H1 (cell line): ENCODE measurements at regions of chr10 and their contacts with region 1.

Region 1: DNA sequence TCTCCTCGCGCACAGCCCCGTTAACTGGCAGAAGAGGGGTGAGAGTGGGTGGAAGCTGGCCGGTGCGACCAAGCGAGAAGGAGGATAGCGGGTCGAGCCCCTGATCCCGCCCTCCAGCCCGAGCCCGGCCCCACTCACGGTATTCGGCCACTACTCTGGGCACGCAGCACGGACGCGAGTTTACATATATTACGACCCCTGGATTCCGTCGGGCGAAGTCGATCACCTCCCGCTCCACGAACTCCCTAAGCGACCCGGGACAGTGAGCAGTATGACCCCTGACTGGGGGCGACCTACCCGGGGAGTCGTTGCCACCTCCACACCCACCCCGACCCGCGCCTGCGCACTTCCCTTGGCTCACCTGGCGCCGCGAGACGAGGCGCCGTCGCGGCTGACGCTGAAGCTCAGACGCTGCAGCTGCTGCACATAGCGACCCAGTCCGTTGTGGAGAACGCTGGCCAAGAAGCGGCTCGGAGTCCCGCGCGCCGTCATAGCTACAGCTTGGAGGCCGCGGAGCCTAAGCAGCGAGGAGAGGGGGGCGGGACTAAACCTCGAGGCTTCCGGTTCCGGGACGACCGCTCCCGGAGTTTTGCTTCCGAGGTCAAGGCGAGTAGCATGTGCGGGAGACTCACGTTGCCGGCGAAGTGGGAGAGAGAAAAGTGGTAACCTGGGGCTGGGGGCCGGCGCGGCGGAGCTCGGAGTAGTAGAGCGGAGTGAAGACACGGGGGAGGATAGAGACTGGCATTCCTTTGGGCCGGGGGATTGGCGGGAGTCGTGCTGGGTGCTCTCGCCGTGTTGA is at the starts of genes MRPL43 and TWNK:
- DNase-seq: peak in 1 of 2 experiments; percentile 92
- H3K4me3 ChIP-seq: peak within 1 kb of the TSS; percentile 68 to 92 (median 80)
- H3K27ac ChIP-seq: peak within 1 kb of the TSS; percentile 37
- H3K4me1 ChIP-seq: peaks cover 0 to 12% (median 5%) of the 10 kb centered on the region in 4 experiments; a peak in 4 of 7 replicates
- H3K27me3 ChIP-seq: no peaks in the 10 kb centered on the region
- CTCF ChIP-seq: no peak
- EP300 ChIP-seq: no peak
- POLR2A ChIP-seq: peak; percentile 36 to 63; a peak in 2 of 3 replicates
- RAD21 ChIP-seq: no peak
- total RNA-seq, gene MRPL43: 74.1 and 80.9 TPM in 2 replicates
- total RNA-seq, gene TWNK: 32.5 and 34.9 TPM in 2 replicates

Region 2: DNA sequence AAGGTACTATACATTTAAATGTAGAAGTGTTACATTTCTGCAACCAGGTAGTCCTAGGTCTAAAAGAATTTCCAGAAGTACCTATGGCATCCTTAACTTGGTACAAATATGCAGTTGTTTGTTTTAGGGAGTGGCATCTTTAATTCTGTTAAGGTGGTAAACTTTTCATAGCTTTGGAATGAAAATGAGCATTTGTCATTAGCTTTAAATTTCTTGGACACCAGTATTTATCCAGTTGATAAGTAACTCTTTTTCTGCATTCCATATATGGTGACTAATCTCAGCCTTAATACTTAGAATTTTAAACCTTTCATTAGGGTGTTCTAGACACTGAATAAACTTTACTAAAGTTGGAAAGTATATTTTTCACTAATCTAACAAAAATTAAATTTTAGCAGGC is 63.6 kb before region 1 on chr10:
- CTCF ChIA-PET with region 1: no interaction called
- POLR2A ChIA-PET with region 1: no interaction called
- DNase-seq: no peak
- H3K4me3 ChIP-seq: no peak overlapping the region
- H3K27ac ChIP-seq: no peak overlapping the region
- H3K4me1 ChIP-seq: no peaks in the 10 kb centered on the region
- H3K27me3 ChIP-seq: no peaks in the 10 kb centered on the region
- CTCF ChIP-seq: no peak
- EP300 ChIP-seq: no peak
- POLR2A ChIP-seq: no peak
- RAD21 ChIP-seq: no peak

Region 3: GRCh38 chr10:100943508-100943907 is 43.6 kb before region 1 on chr10:
- CTCF ChIA-PET with region 1: no interaction called
- POLR2A ChIA-PET with region 1: no interaction called
- DNase-seq: no peak
- H3K4me3 ChIP-seq: no peak overlapping the region
- H3K27ac ChIP-seq: no peak overlapping the region
- H3K4me1 ChIP-seq: no peaks in the 10 kb centered on the region
- H3K27me3 ChIP-seq: no peaks in the 10 kb centered on the region
- CTCF ChIP-seq: no peak
- EP300 ChIP-seq: no peak
- POLR2A ChIP-seq: no peak
- RAD21 ChIP-seq: no peak

Region 4: GRCh38 chr10:100969187-100970075 is 17.7 kb before region 1 on chr10 and contains the start of gene SEMA4G:
- CTCF ChIA-PET with region 1: interaction called, 10 read pairs
- POLR2A ChIA-PET with region 1: interaction called, 38 read pairs
- DNase-seq: peak; percentile 67 to 90
- H3K4me3 ChIP-seq: peak within 1 kb of the TSS; percentile 67 to 97 (median 72)
- H3K27ac ChIP-seq: no peak within 1 kb of the TSS
- H3K4me1 ChIP-seq: peaks cover 7 to 19% (median 10%) of the 10 kb centered on the region in 4 experiments
- H3K27me3 ChIP-seq: peaks cover 0 to 3% (median 1%) of the 10 kb centered on the region in 4 experiments; a peak in 1 of 7 replicates
- CTCF ChIP-seq: peak; percentile 66 to 80 (median 71)
- EP300 ChIP-seq: no peak
- POLR2A ChIP-seq: no peak
- RAD21 ChIP-seq: peak in 1 of 2 experiments; percentile 36; a peak in 1 of 4 replicates
- total RNA-seq, gene SEMA4G: 7.1 and 7.6 TPM in 2 replicates